ENCODE measurements at regions of chr6 and their contacts with region 1.

Region 1: GRCh38 chr6:125790358-125791150 is at the start of gene NCOA7:
- DNase-seq: peak; percentile 83
- H3K4me3 Mint-ChIP-seq: peak within 1 kb of the TSS; percentile 90
- H3K27ac Mint-ChIP-seq: peak within 1 kb of the TSS; percentile 96
- H3K4me1 Mint-ChIP-seq: peaks cover 55% of the 10 kb centered on the region
- H3K27me3 Mint-ChIP-seq: no peaks in the 10 kb centered on the region
- total RNA-seq, gene NCOA7: 45.2 to 49.9 TPM

Region 2: DNA sequence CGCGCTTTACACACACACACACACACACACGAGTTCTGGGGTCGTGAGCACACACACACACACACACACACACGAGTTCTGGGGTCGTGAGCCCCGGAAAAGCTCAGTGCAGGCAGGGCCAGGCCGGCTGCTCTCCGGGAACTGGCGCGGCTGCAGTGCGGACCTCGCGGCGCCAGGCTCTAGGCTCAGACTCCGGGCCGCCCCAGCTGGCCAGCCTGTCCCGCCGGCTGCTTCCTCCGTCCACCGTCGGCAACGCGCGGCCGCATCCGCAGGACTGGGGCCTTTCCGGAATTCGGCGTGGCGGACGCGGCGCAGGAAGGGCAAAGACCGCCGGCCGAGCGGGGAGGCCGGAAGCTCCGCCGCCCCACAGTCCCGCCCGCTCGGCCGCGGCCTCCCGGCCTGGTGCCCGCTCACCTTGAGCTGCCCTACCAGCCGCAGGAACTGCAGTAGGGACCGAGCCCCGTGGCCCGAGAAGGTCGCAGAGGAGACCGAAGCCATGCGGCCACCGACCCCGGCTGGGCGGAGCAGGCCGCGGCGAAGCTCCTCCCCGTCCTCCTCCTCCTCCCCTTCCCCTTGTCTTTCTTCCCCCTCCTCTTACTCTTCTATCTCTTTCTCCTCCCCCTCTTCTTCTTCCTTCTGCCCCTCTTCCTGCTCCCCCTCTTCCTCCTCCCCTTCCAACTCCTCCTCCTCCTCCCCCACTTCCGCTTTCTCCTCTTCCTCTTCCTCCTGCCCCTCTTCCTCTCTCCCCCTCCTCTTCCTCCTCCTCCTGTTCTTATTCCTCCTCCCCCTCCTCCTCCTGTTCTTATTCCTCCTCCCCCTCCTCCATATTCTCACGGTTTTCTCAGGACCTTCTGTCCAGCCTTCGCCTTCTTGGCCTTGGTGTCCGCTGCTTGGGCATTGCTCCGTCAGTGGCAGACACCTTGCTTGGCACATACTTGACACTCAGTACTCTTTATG is 488.8 kb before region 1 on chr6 and contains the start of gene HDDC2:
- CTCF ChIA-PET with region 1: interaction called, 3 read pairs
- POLR2A ChIA-PET with region 1: interaction called, 15 read pairs
- DNase-seq: peak; percentile 60
- H3K4me3 Mint-ChIP-seq: peak within 1 kb of the TSS; percentile 81
- H3K27ac Mint-ChIP-seq: peak within 1 kb of the TSS; percentile 84
- H3K4me1 Mint-ChIP-seq: peaks cover 41% of the 10 kb centered on the region
- H3K27me3 Mint-ChIP-seq: peaks cover 20% of the 10 kb centered on the region
- total RNA-seq, gene HDDC2: 47.3 to 50.0 TPM

Region 3: GRCh38 chr6:125738276-125738675 is 52.3 kb before region 1 on chr6:
- CTCF ChIA-PET with region 1: no interaction called
- POLR2A ChIA-PET with region 1: no interaction called
- DNase-seq: no peak
- H3K4me3 Mint-ChIP-seq: no peak overlapping the region
- H3K27ac Mint-ChIP-seq: no peak overlapping the region
- H3K4me1 Mint-ChIP-seq: no peaks in the 10 kb centered on the region
- H3K27me3 Mint-ChIP-seq: peaks cover 44% of the 10 kb centered on the region

Region 4: GRCh38 chr6:125804264-125804663 is 13.7 kb after region 1 on chr6:
- CTCF ChIA-PET with region 1: interaction called, 15 read pairs
- POLR2A ChIA-PET with region 1: interaction called, 41 read pairs
- DNase-seq: no peak
- H3K4me3 Mint-ChIP-seq: no peak overlapping the region
- H3K27ac Mint-ChIP-seq: no peak overlapping the region
- H3K4me1 Mint-ChIP-seq: peaks cover 57% of the 10 kb centered on the region
- H3K27me3 Mint-ChIP-seq: no peaks in the 10 kb centered on the region

Region 5: GRCh38 chr6:125834348-125834747 is 43.8 kb after region 1 on chr6:
- CTCF ChIA-PET with region 1: interaction called, 30 read pairs
- POLR2A ChIA-PET with region 1: interaction called, 59 read pairs
- DNase-seq: no peak
- H3K4me3 Mint-ChIP-seq: no peak overlapping the region
- H3K27ac Mint-ChIP-seq: peak overlapping the region; percentile 11
- H3K4me1 Mint-ChIP-seq: peaks cover 53% of the 10 kb centered on the region
- H3K27me3 Mint-ChIP-seq: no peaks in the 10 kb centered on the region

Region 6: GRCh38 chr6:125918681-125919566 is 128.4 kb after region 1 on chr6:
- CTCF ChIA-PET with region 1: interaction called, 20 read pairs
- POLR2A ChIA-PET with region 1: interaction called, 28 read pairs
- DNase-seq: peak; percentile 58
- H3K4me3 Mint-ChIP-seq: peak overlapping the region; percentile 74
- H3K27ac Mint-ChIP-seq: peak overlapping the region; percentile 82
- H3K4me1 Mint-ChIP-seq: peaks cover 46% of the 10 kb centered on the region
- H3K27me3 Mint-ChIP-seq: no peaks in the 10 kb centered on the region

Region 7: DNA sequence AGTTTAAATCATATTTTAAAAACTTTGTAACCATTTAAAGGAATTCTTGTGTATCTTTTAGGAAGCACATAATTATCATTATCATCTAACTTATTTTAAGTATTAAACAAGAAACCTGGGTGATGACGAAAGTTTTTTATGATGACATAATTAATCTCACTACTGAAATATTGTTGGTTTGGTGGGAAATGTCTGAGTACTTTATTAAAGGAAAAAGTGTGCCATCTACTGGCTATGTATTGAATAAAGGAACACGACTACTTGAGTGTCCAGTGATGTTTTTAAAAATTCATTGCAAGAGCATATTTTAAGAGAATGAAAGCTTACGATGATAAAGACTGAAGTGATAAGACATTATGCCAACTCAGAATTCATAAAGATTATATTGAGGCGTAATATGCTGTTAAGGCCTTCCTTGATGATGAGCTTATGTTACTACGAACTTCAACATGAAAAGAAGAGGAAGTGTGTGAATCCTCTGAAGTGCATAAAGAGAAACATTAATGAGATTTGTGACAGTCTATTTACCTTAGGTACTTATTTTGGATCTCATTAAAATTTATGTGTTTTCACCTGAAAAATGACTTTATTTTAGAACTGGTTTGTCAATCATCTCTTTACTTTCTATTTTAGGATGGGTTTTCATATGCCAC is 183.8 kb after region 1 on chr6:
- CTCF ChIA-PET with region 1: interaction called, 33 read pairs
- POLR2A ChIA-PET with region 1: interaction called, 8 read pairs
- DNase-seq: no peak
- H3K4me3 Mint-ChIP-seq: no peak overlapping the region
- H3K27ac Mint-ChIP-seq: no peak overlapping the region
- H3K4me1 Mint-ChIP-seq: peaks cover 5% of the 10 kb centered on the region
- H3K27me3 Mint-ChIP-seq: no peaks in the 10 kb centered on the region

Region 8: GRCh38 chr6:125995972-125996580 is 205.5 kb after region 1 on chr6:
- CTCF ChIA-PET with region 1: interaction called, 14 read pairs
- POLR2A ChIA-PET with region 1: no interaction called
- DNase-seq: peak; percentile 73
- H3K4me3 Mint-ChIP-seq: peak overlapping the region; percentile 54
- H3K27ac Mint-ChIP-seq: peak overlapping the region; percentile 2
- H3K4me1 Mint-ChIP-seq: peaks cover 11% of the 10 kb centered on the region
- H3K27me3 Mint-ChIP-seq: no peaks in the 10 kb centered on the region

Measured in activated CD4-positive, alpha-beta memory T cell treated with anti-CD3 and anti-CD28 coated beads, Interleukin-2, amount 10 ng/mL, durations not matched to agents 7 days and 5 days (primary cell).